IMR-90 (cell line): ENCODE measurements at regions of chr17 and their contacts with region 1.

Region 1: DNA sequence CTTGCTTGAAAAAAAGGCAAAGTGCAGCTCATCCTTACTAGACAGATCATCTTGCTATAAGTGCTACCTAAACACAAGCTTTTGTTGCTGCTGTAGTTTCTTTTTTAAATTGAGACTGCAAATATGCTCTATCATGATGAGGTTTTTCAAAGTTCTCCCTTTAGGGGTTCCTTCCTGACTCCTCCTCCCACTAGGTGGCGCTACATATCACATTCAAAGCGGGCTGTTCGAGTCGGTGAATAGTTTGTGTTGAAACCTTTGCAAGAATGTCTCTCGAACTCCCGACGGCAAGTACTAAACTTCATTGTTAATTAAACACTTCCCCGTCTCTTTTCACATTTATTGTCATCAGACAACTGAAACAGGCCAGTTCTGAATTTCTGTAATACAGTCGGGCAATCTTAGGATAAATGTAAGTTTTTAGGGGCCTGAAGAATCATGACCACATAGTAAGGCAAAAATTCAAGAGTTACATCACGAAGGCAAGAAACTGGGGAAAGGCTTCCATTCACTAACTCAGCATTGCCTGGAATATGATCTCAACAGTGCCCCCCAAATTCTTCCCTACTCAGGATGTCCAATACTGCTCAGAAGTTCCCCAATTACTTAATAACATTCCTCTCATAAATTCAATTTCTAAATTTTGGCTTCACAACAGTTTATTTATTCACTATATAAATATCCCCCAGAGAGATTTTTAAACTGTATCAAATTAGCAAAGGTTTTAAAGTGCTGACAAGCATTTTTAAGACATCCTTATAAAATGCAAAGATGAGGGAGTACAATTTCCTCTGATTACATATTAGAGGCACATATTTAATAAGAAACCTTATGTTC is 6.7 kb downstream of the HS3ST3A1 start:
- DNase-seq: peak; percentile 89
- ATAC-seq: peak; percentile 44
- H3K4me3 ChIP-seq: peak overlapping the region; percentile 9; the same call in 1 of the 2 replicates
- H3K27ac ChIP-seq: peak overlapping the region; percentile 59; the same call in 1 of the 2 replicates
- H3K4me1 ChIP-seq: peaks cover 21% of the 10 kb centered on the region
- H3K27me3 ChIP-seq: no peaks in the 10 kb centered on the region
- CTCF ChIP-seq: peak; percentile 85
- POLR2A ChIP-seq: 0 out of 2 replicates have a peak, but pooled peaks have one; percentile 25
- RAD21 ChIP-seq: peak; percentile 75

Region 2: GRCh38 chr17:13114601-13115031 is 480.4 kb before region 1 on chr17:
- CTCF ChIA-PET with region 1: no interaction called
- POLR2A ChIA-PET with region 1: no interaction called
- dilution Hi-C with region 1: no loop called
- in situ Hi-C with region 1: no loop called
- intact Hi-C with region 1: loop called (anchors 1 kb)
- DNase-seq: peak; percentile 28
- ATAC-seq: peak; percentile 100
- H3K4me3 ChIP-seq: no peak overlapping the region; the same call in 1 of the 2 replicates
- H3K27ac ChIP-seq: no peak overlapping the region
- H3K4me1 ChIP-seq: no peaks in the 10 kb centered on the region
- H3K27me3 ChIP-seq: peaks cover 17% of the 10 kb centered on the region
- CTCF ChIP-seq: peak; percentile 71
- POLR2A ChIP-seq: no peak
- RAD21 ChIP-seq: peak; percentile 75

Region 3: GRCh38 chr17:13337864-13338371 is 257.1 kb before region 1 on chr17:
- CTCF ChIA-PET with region 1: interaction called, 8 read pairs
- POLR2A ChIA-PET with region 1: no interaction called
- dilution Hi-C with region 1: no loop called
- in situ Hi-C with region 1: loop called (anchors 5 kb)
- intact Hi-C with region 1: loop called (anchors 1 kb)
- DNase-seq: peak; percentile 78
- ATAC-seq: peak; percentile 84
- H3K4me3 ChIP-seq: peak overlapping the region; percentile 54
- H3K27ac ChIP-seq: no peak overlapping the region
- H3K4me1 ChIP-seq: peaks cover 5% of the 10 kb centered on the region
- H3K27me3 ChIP-seq: no peaks in the 10 kb centered on the region
- CTCF ChIP-seq: peak; percentile 92
- POLR2A ChIP-seq: peak; percentile 45; the same call in 1 of the 2 replicates
- RAD21 ChIP-seq: peak; percentile 93

Region 4: GRCh38 chr17:14805348-14805747 is 1210.4 kb after region 1 on chr17:
- CTCF ChIA-PET with region 1: no interaction called
- POLR2A ChIA-PET with region 1: no interaction called
- dilution Hi-C with region 1: no loop called
- in situ Hi-C with region 1: no loop called
- intact Hi-C with region 1: loop called (anchors 10 kb)
- DNase-seq: no peak
- ATAC-seq: peak; percentile 76
- H3K4me3 ChIP-seq: no peak overlapping the region
- H3K27ac ChIP-seq: no peak overlapping the region
- H3K4me1 ChIP-seq: peaks cover 2% of the 10 kb centered on the region; the same call in 1 of the 2 replicates
- H3K27me3 ChIP-seq: no peaks in the 10 kb centered on the region
- CTCF ChIP-seq: no peak
- POLR2A ChIP-seq: no peak
- RAD21 ChIP-seq: no peak

Region 5: DNA sequence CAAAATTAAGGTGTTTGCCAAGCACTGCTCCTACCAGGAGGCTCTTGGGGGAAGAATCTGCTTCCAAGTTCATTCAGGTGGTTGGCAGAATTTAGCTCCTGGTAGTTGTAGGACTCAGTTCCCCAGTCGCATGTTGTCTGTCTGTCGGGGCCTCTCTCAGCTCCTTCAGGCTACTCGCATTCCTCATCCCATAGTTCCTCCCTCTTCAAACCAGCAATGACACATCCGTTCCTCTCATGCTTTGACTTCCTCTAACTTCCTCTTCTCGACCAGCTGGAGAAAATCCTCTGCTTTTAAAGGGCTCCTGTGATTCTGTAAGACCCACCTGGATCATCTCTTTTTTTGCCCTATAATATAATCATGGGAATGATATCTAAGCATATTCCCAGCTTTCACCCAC is 1562.1 kb after region 1 on chr17:
- CTCF ChIA-PET with region 1: interaction called, 4 read pairs
- POLR2A ChIA-PET with region 1: no interaction called
- dilution Hi-C with region 1: no loop called
- in situ Hi-C with region 1: no loop called
- intact Hi-C with region 1: loop called (anchors 5 kb)
- DNase-seq: peak; percentile 44
- ATAC-seq: peak; percentile 46; the same call in 1 of the 2 replicates
- H3K4me3 ChIP-seq: no peak overlapping the region
- H3K27ac ChIP-seq: no peak overlapping the region
- H3K4me1 ChIP-seq: no peaks in the 10 kb centered on the region
- H3K27me3 ChIP-seq: peaks cover under 1% of the 10 kb centered on the region; the same call in 1 of the 2 replicates
- CTCF ChIP-seq: no peak
- POLR2A ChIP-seq: no peak
- RAD21 ChIP-seq: no peak